Activated CD4-positive, alpha-beta memory T cell treated with anti-CD3 and anti-CD28 coated beads, Interleukin-2, amount 10 ng/mL, durations not matched to agents 7 days and 5 days (primary cell): ENCODE measurements at regions of chr7 and their contacts with region 1.

Region 1: DNA sequence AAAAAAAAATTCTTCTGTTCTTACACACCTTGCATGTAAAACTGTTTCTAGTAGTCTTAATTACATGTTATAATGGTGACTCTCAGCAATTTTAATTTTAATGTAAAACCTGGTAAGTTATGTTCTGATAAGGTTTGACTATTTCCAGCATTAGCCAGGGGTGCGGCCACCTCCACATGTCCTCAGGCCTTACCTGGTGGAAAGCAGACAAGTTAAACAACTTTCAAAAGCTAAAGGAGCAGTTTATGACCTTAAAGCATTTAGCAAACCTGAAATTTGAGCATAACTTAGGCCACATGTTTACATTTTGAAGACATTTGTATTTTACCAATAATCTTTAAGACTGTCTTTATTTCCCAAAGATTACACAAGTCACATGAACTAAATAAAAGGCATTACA is 36.6 kb downstream of the NPVF start:
- DNase-seq: no peak
- H3K4me3 Mint-ChIP-seq: no peak overlapping the region
- H3K27ac Mint-ChIP-seq: no peak overlapping the region
- H3K4me1 Mint-ChIP-seq: no peaks in the 10 kb centered on the region
- H3K27me3 Mint-ChIP-seq: peaks cover 12% of the 10 kb centered on the region

Region 2: GRCh38 chr7:25179771-25180591 is 11.7 kb before region 1 on chr7:
- CTCF ChIA-PET with region 1: interaction called, 14 read pairs
- POLR2A ChIA-PET with region 1: no interaction called
- DNase-seq: peak; percentile 95
- H3K4me3 Mint-ChIP-seq: peak overlapping the region; percentile 79
- H3K27ac Mint-ChIP-seq: peak overlapping the region; percentile 74
- H3K4me1 Mint-ChIP-seq: peaks cover 23% of the 10 kb centered on the region
- H3K27me3 Mint-ChIP-seq: peaks cover 15% of the 10 kb centered on the region

Region 3: GRCh38 chr7:26071622-26072456 is 880.2 kb after region 1 on chr7:
- CTCF ChIA-PET with region 1: no interaction called
- POLR2A ChIA-PET with region 1: no interaction called
- DNase-seq: no peak
- H3K4me3 Mint-ChIP-seq: no peak overlapping the region
- H3K27ac Mint-ChIP-seq: no peak overlapping the region
- H3K4me1 Mint-ChIP-seq: no peaks in the 10 kb centered on the region
- H3K27me3 Mint-ChIP-seq: peaks cover 28% of the 10 kb centered on the region